Activated CD4-positive, alpha-beta T cell treated with anti-CD3 and anti-CD28 coated beads for 36 hours (primary cell): ENCODE measurements at regions of chr15 and their contacts with region 1.

Region 1: DNA sequence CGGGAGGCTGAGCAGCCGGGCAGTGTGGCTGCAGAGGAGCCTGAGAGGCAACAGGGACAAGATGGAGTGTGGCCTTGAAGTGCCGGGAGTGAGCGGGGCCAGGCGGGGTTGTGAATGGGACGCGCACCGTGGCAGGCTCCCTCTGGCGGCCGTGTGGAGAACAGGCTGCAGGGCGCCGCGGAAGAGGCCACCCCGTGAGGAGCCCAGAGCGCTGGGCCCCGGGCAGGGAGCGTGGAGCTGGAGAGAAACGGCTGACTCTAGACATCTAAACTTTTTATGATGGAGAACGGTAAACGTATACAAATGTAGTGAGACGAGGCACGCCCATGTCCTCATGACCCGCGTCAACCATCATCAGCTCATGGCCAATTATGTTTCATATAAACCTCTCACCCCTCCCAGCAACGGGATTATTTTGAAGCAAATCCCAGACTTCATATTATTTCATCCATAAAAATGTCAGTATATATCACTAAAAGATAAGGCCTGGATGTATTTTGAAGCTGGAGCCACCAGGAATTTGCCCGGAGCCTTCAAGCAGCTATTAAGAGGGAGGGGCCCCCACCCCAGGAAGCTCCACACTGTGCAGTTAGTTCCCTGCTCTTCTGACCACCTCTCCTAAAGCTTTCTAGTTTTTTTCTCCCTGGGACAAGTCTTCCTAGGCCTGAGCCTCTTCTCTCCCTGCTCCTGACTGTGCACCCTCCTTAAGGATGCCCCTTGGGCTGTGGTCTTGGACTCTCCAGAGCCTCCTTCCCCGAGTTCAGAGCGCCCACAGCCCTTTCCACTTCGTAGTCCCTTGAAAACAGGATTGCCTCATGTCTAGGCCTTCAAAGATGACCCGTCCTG is 149.4 kb downstream of the SMAD6 start:
- DNase-seq: peak; percentile 90
- ATAC-seq: peak; percentile 100
- H3K4me3 Mint-ChIP-seq: no peak overlapping the region
- H3K27ac Mint-ChIP-seq: peak overlapping the region; percentile 58
- H3K4me1 Mint-ChIP-seq: peaks cover 6% of the 10 kb centered on the region
- H3K27me3 Mint-ChIP-seq: peaks cover 15% of the 10 kb centered on the region

Region 2: DNA sequence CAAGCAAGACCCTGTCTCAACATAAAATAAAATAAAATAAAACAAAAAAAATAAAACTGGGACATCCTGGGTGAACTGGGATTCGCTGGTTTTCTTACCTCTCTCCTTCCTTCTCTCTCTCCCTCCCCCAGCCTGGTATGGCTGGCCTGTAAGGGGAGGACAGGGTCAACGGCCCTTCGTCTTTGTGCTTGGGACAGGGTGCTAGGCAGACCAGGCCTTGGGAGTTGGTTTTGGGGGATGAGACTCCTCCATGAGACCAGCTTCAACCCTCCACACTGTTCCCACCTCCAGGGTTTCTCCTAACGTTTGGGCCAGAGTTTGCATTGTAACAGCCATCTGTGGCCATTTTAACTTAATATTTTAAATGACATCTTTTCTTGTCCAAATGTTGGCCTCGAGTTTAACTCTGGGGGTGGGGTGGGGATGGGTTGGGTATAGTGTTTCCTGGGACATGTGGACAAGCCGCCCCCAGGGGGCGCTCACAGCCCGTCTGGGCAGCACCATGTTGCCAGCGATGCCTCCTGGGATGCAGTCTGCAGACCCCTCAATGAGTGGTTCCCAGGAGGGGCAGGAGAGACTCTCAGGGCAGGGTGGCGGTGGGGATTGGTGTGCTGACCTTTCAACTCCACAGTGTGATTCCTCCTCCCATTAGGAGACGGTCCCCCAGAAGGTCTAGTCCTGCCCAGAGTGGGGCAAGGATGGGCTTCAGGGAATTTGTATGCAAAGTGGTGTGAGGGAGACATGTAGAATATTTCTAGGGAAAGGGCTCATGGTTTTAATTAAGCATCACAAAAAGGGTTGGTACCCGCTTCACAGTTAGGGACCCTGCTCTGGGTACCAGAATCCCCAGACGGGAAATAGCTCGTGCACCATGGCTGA is 247.9 kb before region 1 on chr15:
- CTCF ChIA-PET with region 1: interaction called, 32 read pairs
- POLR2A ChIA-PET with region 1: interaction called, 3 read pairs
- intact Hi-C with region 1: loop called (anchors 1 kb)
- DNase-seq: peak; percentile 82
- ATAC-seq: peak; percentile 86
- H3K4me3 Mint-ChIP-seq: no peak overlapping the region
- H3K27ac Mint-ChIP-seq: no peak overlapping the region
- H3K4me1 Mint-ChIP-seq: peaks cover under 1% of the 10 kb centered on the region
- H3K27me3 Mint-ChIP-seq: peaks cover 4% of the 10 kb centered on the region

Region 3: DNA sequence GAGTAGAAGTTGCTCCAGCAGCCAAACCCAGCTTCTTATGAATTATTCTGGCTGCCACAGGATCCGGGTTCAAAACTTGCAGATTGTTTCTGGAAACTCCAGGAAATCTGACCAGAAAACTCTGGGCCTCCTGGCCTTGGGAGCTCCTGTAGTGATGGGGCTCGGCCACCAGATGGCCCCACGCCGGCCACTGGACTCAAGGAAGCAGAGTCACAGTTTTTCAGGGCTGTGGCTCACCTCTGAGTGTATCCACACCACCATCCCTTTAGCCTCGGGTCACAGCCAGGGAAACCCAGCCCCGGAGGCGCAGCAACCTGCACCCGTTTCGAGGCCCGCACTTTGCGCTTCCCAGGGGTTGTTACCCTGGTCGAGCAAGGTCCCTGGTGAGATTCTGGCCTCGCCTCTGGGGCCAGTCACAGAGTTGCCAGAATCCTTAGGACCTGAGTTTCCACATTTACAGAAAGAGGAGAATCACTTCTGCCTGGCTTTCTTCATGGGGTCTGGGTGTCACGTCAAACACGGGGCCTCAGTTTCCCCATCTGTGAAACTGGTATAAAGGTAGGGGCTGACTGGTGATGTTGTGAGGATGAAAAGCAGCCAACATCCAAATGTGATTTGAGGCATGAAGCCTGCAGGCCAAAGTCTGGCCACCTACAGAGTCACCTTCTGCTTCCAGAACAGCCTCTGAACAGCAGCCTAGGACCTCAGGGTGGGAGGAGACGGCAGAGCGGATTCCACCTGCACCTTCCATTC is 232.1 kb before region 1 on chr15:
- CTCF ChIA-PET with region 1: interaction called, 33 read pairs
- POLR2A ChIA-PET with region 1: no interaction called
- intact Hi-C with region 1: loop called (anchors 1 to 5 kb)
- DNase-seq: peak; percentile 70
- ATAC-seq: peak; percentile 65
- H3K4me3 Mint-ChIP-seq: no peak overlapping the region
- H3K27ac Mint-ChIP-seq: no peak overlapping the region
- H3K4me1 Mint-ChIP-seq: no peaks in the 10 kb centered on the region
- H3K27me3 Mint-ChIP-seq: peaks cover 27% of the 10 kb centered on the region

Region 4: DNA sequence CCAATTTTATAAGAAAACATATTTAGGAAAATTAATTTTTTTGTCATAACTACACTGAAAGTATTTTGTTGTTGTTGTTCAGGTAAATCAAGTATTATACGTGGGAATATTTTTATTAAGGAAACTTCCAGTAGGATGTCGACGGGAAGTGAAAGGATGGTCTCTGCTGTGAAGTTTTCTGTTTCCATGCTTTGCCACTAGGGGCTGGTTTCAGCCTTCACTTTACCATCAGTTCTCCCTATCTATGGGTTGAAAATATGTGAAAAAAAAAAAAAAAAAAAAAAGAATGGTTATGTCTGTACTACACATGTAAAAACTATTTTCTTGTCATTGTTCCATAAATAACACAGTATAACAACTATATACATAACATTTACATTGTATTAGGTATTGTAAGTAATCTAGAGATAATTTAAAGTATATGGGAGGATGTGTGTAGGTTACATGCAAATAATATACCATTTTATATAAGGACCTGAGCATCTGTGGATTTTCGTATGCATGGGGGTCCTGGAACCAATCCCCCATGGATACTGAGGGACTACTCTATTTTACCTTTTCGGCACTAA is 12.7 kb before region 1 on chr15:
- CTCF ChIA-PET with region 1: interaction called, 21 read pairs
- POLR2A ChIA-PET with region 1: no interaction called
- intact Hi-C with region 1: no loop called
- DNase-seq: no peak
- ATAC-seq: no peak
- H3K4me3 Mint-ChIP-seq: no peak overlapping the region
- H3K27ac Mint-ChIP-seq: no peak overlapping the region
- H3K4me1 Mint-ChIP-seq: no peaks in the 10 kb centered on the region
- H3K27me3 Mint-ChIP-seq: peaks cover 17% of the 10 kb centered on the region

Region 5: DNA sequence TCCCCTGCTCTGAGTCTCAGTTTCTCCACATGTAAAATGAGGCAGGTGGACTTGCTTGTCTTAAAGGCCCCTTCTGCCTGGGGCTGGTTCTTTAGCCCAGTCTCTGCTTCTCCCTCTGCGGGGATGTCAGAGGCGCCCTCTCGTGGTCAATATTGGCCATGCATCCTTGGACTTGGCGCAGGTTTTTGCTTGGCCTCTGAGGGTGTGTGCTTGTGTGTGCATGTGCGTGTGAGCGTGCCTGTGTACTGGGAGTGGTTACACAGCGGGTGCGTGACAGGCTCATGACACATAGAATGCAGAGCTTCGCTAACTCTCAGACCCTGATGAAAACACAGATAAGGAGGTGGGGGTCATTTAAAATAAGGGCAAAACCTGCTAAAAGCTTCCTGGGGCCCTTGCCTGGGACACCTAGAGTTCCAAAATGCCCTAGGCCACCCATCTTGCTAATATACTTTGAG is 11.5 kb after region 1 on chr15:
- CTCF ChIA-PET with region 1: interaction called, 20 read pairs
- POLR2A ChIA-PET with region 1: no interaction called
- intact Hi-C with region 1: no loop called
- DNase-seq: peak; percentile 88
- ATAC-seq: peak; percentile 98
- H3K4me3 Mint-ChIP-seq: no peak overlapping the region
- H3K27ac Mint-ChIP-seq: peak overlapping the region; percentile 11
- H3K4me1 Mint-ChIP-seq: no peaks in the 10 kb centered on the region
- H3K27me3 Mint-ChIP-seq: peaks cover 16% of the 10 kb centered on the region